SK-N-SH (cell line): ENCODE measurements at regions of chr3 and their contacts with region 1.

Region 1: GRCh38 chr3:62622553-62623193 is 249.3 kb upstream of the FEZF2 start:
- DNase-seq: peak; percentile 44
- H3K4me3 ChIP-seq: no peak overlapping the region; a peak in 1 of 4 replicates
- H3K27ac ChIP-seq: no peak overlapping the region
- H3K4me1 ChIP-seq: no peaks in the 10 kb centered on the region
- H3K27me3 ChIP-seq: no peaks in the 10 kb centered on the region
- CTCF ChIP-seq: peak; percentile 76
- EP300 ChIP-seq: no peak
- RAD21 ChIP-seq: peak; percentile 87

Region 2: GRCh38 chr3:62073038-62073437 is 549.6 kb before region 1 on chr3:
- CTCF ChIA-PET with region 1: no interaction called
- POLR2A ChIA-PET with region 1: no interaction called
- DNase-seq: no peak
- H3K4me3 ChIP-seq: no peak overlapping the region
- H3K27ac ChIP-seq: no peak overlapping the region
- H3K4me1 ChIP-seq: no peaks in the 10 kb centered on the region; a peak in 1 of 4 replicates
- H3K27me3 ChIP-seq: no peaks in the 10 kb centered on the region
- CTCF ChIP-seq: no peak
- EP300 ChIP-seq: no peak
- RAD21 ChIP-seq: no peak

Region 3: GRCh38 chr3:62636235-62636826 is 13.7 kb after region 1 on chr3:
- CTCF ChIA-PET with region 1: interaction called, 13 read pairs
- POLR2A ChIA-PET with region 1: no interaction called
- DNase-seq: no peak
- H3K4me3 ChIP-seq: no peak overlapping the region
- H3K27ac ChIP-seq: no peak overlapping the region
- H3K4me1 ChIP-seq: no peaks in the 10 kb centered on the region
- H3K27me3 ChIP-seq: no peaks in the 10 kb centered on the region
- CTCF ChIP-seq: no peak
- EP300 ChIP-seq: no peak
- RAD21 ChIP-seq: no peak

Region 4: GRCh38 chr3:63228087-63229023 is 605.7 kb after region 1 on chr3:
- CTCF ChIA-PET with region 1: interaction called, 20 read pairs
- POLR2A ChIA-PET with region 1: no interaction called
- DNase-seq: peak; percentile 33
- H3K4me3 ChIP-seq: peak overlapping the region in 1 of 2 experiments; percentile 20; a peak in 1 of 4 replicates
- H3K27ac ChIP-seq: no peak overlapping the region
- H3K4me1 ChIP-seq: no peaks in the 10 kb centered on the region
- H3K27me3 ChIP-seq: no peaks in the 10 kb centered on the region
- CTCF ChIP-seq: peak; percentile 73
- EP300 ChIP-seq: no peak
- RAD21 ChIP-seq: peak; percentile 77

Region 5: DNA sequence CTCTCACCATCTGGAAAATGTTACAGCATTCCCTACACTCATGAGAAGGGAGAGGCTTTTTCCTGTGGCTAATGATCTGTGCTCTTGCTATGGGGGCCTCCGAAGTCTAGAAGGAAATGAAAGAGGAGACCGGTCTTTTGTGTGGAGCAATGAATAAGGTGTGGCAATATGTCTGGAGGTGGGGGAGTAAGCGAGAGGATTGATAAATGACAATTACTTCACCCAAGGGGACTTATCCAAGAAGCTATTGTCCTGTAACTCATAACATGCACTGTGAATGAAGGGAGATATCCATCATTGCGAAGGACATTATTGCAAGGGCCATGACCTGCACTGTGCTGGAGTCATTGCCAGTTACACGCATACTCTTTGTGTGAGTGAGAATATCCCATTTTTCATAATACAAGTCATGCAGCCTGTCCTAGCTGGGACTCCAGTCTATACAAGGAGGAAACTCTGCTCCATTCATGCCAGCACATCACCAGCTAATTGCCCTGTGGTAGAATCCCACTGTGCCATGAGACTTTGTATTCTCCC is 617.8 kb after region 1 on chr3:
- CTCF ChIA-PET with region 1: interaction called, 11 read pairs
- POLR2A ChIA-PET with region 1: no interaction called
- DNase-seq: no peak
- H3K4me3 ChIP-seq: no peak overlapping the region
- H3K27ac ChIP-seq: no peak overlapping the region
- H3K4me1 ChIP-seq: no peaks in the 10 kb centered on the region
- H3K27me3 ChIP-seq: no peaks in the 10 kb centered on the region
- CTCF ChIP-seq: no peak
- EP300 ChIP-seq: no peak
- RAD21 ChIP-seq: no peak